ENCODE measurements at regions of chr2 and their contacts with region 1.

Region 1: DNA sequence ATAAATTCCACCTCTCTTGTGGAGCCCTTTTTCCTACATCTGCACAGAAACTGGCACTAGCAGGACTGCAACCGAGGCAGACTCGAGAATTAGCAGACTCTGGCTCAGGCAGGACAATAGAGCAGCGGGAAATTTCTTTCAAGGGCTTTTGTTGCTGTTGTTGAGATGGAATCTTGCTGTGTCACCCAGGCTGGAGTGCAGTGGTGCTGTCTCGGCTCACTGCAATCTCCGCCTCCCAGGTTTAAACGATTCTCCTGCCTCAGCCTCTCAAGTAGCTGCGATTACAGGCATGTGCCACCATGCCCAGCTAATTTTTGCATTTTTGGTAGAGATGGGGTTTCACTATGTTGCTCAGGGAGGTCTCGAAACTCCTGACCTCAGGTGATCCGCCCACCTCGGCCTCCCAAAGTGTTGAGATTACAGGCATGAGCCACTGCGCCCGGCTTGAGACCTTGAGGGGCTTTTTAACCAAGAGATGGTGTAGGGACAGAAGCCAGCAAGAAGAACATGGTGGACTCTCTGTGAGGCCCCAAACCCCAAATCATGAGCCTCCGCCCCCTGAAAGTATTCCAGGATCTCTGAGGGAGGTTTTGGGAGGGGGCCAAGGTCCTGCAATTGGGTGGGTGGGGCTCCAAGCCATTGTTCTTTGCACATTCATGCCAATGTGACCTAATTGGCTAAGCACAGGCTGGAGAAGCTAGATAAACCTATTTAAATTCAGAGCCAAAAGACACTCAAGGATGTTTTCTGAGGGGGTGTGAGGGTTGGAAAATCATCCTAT is 68.4 kb upstream of the MSH2 start:
- DNase-seq: no peak
- H3K4me3 ChIP-seq: no peak overlapping the region
- H3K27ac ChIP-seq: no peak overlapping the region
- H3K4me1 ChIP-seq: peaks cover 10% of the 10 kb centered on the region
- H3K27me3 ChIP-seq: no peaks in the 10 kb centered on the region
- CTCF ChIP-seq: no peak

Region 2: DNA sequence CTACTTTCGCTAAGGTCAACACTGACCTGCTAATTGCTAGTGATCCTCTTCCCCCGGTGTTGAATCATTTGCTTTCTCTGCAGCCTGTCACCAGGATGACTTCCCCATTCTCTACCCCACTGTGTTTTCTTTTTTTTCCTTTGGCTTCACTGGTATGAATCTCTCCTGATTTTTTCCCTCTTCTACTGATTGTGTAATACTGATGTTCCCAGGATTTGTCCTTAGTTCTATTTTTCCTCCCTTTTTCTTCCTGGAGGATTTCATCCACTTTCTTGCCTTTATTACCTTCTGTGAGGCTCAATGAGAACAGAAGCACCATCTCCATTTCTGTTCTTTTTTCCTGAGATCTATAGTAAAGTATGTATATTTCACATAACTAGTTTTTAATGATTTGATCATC is 54.3 kb after region 1 on chr2:
- intact Hi-C with region 1: loop called (anchors 2 kb)
- DNase-seq: no peak
- H3K4me3 ChIP-seq: no peak overlapping the region
- H3K27ac ChIP-seq: no peak overlapping the region
- H3K4me1 ChIP-seq: no peaks in the 10 kb centered on the region
- H3K27me3 ChIP-seq: no peaks in the 10 kb centered on the region
- CTCF ChIP-seq: no peak

Region 3: DNA sequence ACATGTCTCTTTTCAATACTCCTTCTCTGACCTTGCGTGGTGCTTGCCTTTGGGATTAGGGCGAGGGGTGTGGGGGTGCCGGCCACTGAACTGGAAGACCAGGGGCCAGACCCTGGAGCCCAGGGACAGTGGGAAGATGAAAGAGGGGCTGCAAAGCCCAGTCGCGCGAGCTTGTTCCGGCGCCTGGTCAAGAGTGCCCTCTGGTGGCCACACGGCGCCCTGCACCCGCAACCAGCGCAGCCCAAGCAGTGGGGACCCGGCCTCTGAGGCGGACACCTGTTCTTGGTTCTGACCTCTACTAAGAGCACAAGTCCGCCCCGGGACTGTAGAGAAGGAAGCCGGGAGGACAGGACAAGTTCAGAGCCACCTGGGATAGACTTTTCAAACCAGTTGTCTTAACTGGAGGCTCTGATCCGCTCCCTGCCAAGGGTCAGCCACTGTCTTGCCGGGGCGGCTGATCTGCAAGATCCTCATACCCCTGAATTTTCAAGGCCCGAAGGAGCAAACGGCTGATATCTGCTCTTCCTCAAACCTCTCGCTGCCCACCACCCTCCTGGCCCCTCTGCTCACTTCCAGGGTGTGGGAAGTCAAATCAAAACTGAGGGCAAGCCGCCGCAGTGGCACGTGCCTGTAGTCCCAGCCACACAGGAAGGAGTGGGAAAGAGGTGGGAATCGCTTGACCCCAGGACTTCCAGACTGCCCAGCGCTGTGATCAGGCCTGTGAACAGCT is 433.5 kb after region 1 on chr2:
- intact Hi-C with region 1: loop called (anchors 5 kb)
- DNase-seq: peak; percentile 54
- H3K4me3 ChIP-seq: no peak overlapping the region
- H3K27ac ChIP-seq: no peak overlapping the region
- H3K4me1 ChIP-seq: no peaks in the 10 kb centered on the region
- H3K27me3 ChIP-seq: no peaks in the 10 kb centered on the region
- CTCF ChIP-seq: peak; percentile 99

Region 4: DNA sequence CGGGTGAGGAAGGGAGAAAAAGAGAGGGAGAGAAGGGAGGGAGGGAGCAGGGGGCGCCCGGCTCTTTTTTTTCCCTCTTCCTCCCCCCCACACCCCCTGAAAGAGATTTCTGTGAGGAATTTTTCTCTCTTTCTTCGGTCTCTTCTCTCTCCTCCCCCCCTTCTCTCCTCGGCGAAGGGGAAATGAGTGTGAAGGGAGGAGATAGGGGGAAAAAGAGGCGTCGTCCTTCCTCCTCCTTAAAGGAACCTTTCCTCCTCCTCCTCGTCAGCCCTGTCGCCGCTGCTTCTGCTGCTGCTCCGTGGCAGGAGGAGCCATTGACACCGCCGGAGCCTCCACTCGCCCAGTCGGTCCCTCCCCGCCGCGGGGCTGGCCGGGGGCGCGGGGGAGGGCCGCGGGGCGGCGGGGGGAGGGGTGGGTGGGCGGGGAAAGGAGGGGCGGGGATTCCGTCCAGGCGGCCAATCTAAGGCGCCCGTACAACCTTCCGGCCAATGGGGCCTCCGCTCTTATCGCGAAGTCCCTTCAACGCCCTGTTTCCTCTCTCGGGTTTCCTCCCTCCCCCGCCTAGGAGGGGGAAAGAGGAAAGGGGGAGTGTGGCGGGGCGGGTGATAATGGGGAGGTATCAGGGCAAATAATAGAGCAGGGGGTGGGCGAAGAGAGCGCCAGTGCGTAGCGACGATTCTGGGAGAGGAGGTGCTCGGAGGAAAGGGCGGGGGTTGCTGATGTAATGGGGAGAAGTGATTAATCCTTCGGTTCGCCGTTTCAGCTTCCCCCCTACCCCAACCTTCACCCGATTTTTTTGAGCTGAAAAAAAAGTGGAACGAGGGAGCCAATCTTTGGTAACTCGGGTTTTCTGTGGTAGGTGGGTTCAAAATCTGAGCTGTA is 571.9 kb after region 1 on chr2 and contains the start of gene FBXO11:
- intact Hi-C with region 1: no loop called
- DNase-seq: peak; percentile 96
- H3K4me3 ChIP-seq: peak within 1 kb of the TSS; percentile 77
- H3K27ac ChIP-seq: peak within 1 kb of the TSS; percentile 99
- H3K4me1 ChIP-seq: no peaks in the 10 kb centered on the region
- H3K27me3 ChIP-seq: no peaks in the 10 kb centered on the region
- CTCF ChIP-seq: no peak
- total RNA-seq, gene FBXO11: 40.4 to 47.7 TPM